A549 (cell line): ENCODE measurements at regions of chr1 and their contacts with region 1.

Region 1: GRCh38 chr1:41484372-41485241 is at the start of gene EDN2:
- DNase-seq: peak; percentile 28 to 52
- ATAC-seq: peak; percentile 73 to 81
- H3K4me3 ChIP-seq: peak within 1 kb of the TSS; percentile 9; the same call in 1 of the 3 replicates
- H3K27ac ChIP-seq: peak within 1 kb of the TSS; percentile 79 to 93
- H3K4me1 ChIP-seq: peaks cover 72% of the 10 kb centered on the region
- CTCF ChIP-seq: no peak
- EP300 ChIP-seq: no peak
- POLR2A ChIP-seq: peak; percentile 38; the same call in 1 of the 2 replicates
- RAD21 ChIP-seq: no peak
- polyA plus RNA-seq, gene EDN2: 1.2 and 1.6 TPM in 2 replicates

Region 2: DNA sequence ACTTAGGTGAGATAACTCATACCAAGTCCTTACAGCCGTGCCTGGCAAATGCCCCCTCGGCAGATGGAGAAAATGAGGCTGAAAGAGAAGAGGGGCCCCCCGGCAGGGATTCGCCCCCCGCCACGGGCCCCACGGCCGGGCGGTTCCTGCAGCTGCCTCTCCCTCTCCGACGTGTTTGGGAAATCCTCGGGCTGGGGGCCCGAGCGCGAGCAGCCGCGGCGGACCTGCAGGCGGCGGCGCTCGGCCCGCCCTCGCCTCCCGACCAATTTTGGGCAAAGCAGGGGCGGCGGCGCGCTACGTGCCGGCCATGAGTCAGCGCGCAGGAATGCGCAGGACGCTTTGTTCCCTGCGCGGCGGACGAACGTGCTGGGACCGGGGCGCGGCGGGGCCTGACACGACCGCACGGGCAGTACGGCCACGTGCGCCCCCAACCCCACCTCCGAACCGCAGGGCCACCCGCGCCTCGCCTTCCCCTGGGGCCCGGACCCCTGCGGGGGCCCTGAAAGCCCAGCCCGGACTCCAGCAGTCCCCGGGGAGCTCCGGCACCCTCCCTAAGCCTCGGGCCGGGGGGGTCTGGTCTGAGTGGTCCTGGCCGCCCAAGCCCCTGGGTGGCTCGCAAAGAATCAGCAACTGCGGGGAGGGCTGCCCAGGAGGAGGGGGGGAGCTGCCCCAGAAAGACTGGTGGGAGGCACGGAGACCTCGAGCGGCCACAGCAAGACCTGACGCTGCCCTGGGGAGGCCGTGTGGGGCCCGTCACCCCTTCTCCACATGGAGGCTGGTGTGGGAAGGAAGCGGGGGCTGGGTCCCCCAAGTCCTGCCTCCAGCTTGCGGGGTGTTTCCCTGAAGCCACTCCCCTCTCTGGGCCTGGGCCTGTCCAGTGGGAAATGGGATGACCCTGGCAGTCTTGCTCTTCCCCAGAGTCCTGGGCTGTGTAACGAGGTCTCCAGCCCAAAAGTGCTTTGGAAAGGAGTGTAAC is 11.8 kb after region 1 on chr1:
- CTCF ChIA-PET with region 1: interaction called, 45 read pairs
- POLR2A ChIA-PET with region 1: interaction called, 3 read pairs
- DNase-seq: peak in 1 of 2 experiments; percentile 82
- ATAC-seq: peak; percentile 57 to 70
- H3K4me3 ChIP-seq: peak overlapping the region; percentile 33
- H3K27ac ChIP-seq: peak overlapping the region; percentile 82 to 100
- H3K4me1 ChIP-seq: peaks cover 90% of the 10 kb centered on the region
- CTCF ChIP-seq: no peak
- EP300 ChIP-seq: no peak; a peak in 1 of 5 replicates
- POLR2A ChIP-seq: no peak
- RAD21 ChIP-seq: no peak